ENCODE measurements at regions of chr21 and their contacts with region 1.

Region 1: GRCh38 chr21:31592963-31593560 is 66.4 kb upstream of the SOD1 start:
- DNase-seq: no peak
- ATAC-seq: peak; percentile 42

Region 2: GRCh38 chr21:31107871-31108270 is 485.2 kb before region 1 on chr21:
- intact Hi-C with region 1: loop called (anchors 10 kb)
- DNase-seq: no peak
- ATAC-seq: peak; percentile 37

Region 3: DNA sequence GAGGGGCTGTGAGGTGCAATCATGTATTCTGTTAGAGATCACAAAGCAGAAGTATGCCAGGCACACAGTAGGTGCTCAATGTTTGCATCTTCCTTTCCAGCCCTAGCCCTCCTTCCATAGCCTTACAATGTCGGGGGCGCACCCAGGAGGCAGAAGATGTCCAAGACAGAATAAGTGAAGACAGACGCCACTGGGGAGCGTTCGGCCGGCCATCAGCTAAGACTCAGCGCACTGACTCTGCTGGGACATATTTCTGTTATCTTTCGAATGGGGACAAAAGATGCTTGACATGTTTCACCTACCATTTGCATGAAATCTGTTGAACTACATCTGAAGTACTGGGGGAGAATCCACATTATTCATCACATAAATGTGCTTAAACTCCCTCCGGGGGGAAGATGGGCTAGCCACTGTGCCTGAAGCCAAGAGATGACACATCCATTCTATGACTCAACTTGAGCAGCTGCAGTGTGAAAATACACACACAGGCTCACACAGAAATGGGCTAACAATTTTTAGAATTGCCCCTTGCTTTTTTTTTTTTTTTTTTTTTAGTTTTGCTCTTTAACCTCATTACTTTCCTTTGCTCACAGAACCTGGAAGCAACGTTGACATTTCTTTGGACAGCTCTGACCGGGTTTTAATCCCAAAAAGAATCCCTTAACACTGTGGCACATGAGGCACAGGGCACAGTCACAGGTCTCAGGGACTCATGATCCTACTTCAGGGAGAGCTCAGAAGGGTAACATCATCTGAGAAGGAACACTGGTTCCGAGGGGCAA is 256.9 kb before region 1 on chr21:
- intact Hi-C with region 1: no loop called
- DNase-seq: no peak
- ATAC-seq: peak; percentile 93

Measured in left ventricle myocardium superior (tissue), 1 donor.